ENCODE measurements at regions of chr5 and their contacts with region 1.

Region 1: GRCh38 chr5:102153003-102153759 is 142.9 kb downstream of the SLCO4C1 start:
- ATAC-seq: peak; percentile 62 to 90 (median 74)
- H3K4me3 ChIP-seq: no peak overlapping the region
- H3K27ac ChIP-seq: no peak overlapping the region
- H3K4me1 ChIP-seq: no peaks in the 10 kb centered on the region

Region 2: GRCh38 chr5:101796427-101796826 is 356.8 kb before region 1 on chr5:
- in situ Hi-C with region 1: no loop called
- ATAC-seq: no peak
- H3K4me3 ChIP-seq: no peak overlapping the region
- H3K27ac ChIP-seq: no peak overlapping the region
- H3K4me1 ChIP-seq: no peaks in the 10 kb centered on the region

Region 3: GRCh38 chr5:101878190-101878589 is 275.0 kb before region 1 on chr5:
- in situ Hi-C with region 1: no loop called
- ATAC-seq: peak in 4 of 8 experiments; percentile 42 to 81 (median 66)
- H3K4me3 ChIP-seq: no peak overlapping the region
- H3K27ac ChIP-seq: no peak overlapping the region
- H3K4me1 ChIP-seq: no peaks in the 10 kb centered on the region

Region 4: DNA sequence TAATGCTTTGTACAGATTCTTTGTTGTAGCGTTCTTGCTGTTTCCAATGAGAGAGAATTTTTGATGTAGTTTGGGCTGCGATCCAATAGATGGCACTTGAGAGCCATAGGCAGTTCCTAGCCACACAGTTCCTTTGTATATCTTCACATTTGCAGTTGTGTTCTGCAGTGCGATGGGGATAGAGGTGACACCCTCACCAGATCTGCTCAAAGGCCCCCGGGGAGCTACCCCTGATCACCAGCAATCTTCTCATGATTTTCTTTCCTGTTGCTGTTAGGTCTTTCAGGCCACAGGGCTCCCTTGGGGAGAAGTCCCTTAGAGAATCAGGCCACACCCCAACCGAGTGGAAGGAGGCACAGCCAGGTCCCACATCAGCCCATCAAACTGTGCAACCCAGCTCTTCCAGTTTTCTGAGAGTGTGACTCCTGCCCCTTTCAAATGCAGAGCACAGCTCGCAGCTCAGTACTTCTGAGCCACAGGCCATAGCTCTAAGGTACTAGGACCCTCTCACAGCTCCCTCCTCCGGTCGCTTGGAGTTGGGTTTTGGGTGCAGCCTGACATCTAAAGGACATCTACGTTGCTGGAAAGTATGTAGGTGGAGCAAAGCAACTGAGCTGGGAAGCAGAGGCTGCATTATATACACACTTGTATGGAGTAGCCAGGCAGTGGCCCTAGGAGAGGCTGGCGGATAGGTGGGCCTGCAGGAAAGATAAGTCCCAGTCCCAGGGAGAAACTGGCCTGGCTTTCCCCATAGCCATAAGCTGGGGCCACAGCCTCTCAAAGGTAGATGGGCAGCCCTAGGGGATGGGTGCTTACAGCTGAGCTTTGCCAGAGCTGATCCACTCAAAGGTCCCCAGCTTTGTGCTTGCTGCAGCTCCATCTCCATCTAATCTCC is 210.6 kb before region 1 on chr5:
- in situ Hi-C with region 1: loop called in 1 of 9 experiments (anchors 25 kb)
- ATAC-seq: peak; percentile 53 to 84 (median 64)
- H3K4me3 ChIP-seq: no peak overlapping the region
- H3K27ac ChIP-seq: no peak overlapping the region
- H3K4me1 ChIP-seq: no peaks in the 10 kb centered on the region

Region 5: GRCh38 chr5:102617191-102618187 is 464.3 kb after region 1 on chr5:
- in situ Hi-C with region 1: no loop called
- ATAC-seq: peak in 1 of 8 experiments; percentile 73
- H3K4me3 ChIP-seq: no peak overlapping the region
- H3K27ac ChIP-seq: no peak overlapping the region
- H3K4me1 ChIP-seq: peaks cover 0 to 9% of the 10 kb centered on the region in 2 donors